Activated naive CD4-positive, alpha-beta T cell treated with anti-CD3 and anti-CD28 coated beads for 36 hours (primary cell): ENCODE measurements at regions of chr1 and their contacts with region 1.

Region 1: GRCh38 chr1:153572569-153573015 is 6.9 kb upstream of the S100A2 start:
- DNase-seq: peak; percentile 85
- H3K4me3 Mint-ChIP-seq: no peak overlapping the region
- H3K27ac Mint-ChIP-seq: peak overlapping the region; percentile 18
- H3K4me1 Mint-ChIP-seq: peaks cover 40% of the 10 kb centered on the region
- H3K27me3 Mint-ChIP-seq: peaks cover 1% of the 10 kb centered on the region

Region 2: DNA sequence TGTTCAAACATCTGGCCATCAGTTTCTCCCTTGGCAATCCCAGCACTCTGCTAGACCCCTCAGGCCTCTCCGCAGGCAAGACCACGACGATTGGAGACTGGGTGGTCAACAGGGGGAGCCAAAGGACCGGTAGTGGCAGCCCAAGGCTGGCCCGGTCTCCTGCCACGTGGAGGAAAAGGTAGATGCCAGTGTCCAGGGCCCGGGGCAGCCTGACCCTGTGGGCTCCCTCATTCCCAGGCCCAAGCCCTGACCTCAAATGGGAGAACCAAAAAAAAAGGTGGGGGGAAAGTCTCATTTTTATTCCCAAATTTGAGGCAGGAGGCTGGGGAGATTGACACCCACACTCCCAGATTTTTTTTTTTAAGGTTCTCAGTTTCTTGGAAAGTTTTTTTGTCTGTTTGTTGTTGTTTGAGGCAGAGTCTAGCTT is 61.6 kb before region 1 on chr1:
- CTCF ChIA-PET with region 1: interaction called, 153 read pairs
- intact Hi-C with region 1: loop called (anchors 1 kb)
- DNase-seq: peak; percentile 90
- H3K4me3 Mint-ChIP-seq: no peak overlapping the region
- H3K27ac Mint-ChIP-seq: peak overlapping the region; percentile 36
- H3K4me1 Mint-ChIP-seq: peaks cover 8% of the 10 kb centered on the region
- H3K27me3 Mint-ChIP-seq: no peaks in the 10 kb centered on the region

Region 3: GRCh38 chr1:153545067-153546055 is 27.2 kb before region 1 on chr1 and contains the start of gene S100A4:
- CTCF ChIA-PET with region 1: interaction called, 23 read pairs
- intact Hi-C with region 1: no loop called
- DNase-seq: peak; percentile 98
- H3K4me3 Mint-ChIP-seq: peak within 1 kb of the TSS; percentile 71
- H3K27ac Mint-ChIP-seq: peak within 1 kb of the TSS; percentile 93
- H3K4me1 Mint-ChIP-seq: peaks cover 74% of the 10 kb centered on the region
- H3K27me3 Mint-ChIP-seq: no peaks in the 10 kb centered on the region
- total RNA-seq, gene S100A4: 36.5 to 37.9 TPM

Region 4: DNA sequence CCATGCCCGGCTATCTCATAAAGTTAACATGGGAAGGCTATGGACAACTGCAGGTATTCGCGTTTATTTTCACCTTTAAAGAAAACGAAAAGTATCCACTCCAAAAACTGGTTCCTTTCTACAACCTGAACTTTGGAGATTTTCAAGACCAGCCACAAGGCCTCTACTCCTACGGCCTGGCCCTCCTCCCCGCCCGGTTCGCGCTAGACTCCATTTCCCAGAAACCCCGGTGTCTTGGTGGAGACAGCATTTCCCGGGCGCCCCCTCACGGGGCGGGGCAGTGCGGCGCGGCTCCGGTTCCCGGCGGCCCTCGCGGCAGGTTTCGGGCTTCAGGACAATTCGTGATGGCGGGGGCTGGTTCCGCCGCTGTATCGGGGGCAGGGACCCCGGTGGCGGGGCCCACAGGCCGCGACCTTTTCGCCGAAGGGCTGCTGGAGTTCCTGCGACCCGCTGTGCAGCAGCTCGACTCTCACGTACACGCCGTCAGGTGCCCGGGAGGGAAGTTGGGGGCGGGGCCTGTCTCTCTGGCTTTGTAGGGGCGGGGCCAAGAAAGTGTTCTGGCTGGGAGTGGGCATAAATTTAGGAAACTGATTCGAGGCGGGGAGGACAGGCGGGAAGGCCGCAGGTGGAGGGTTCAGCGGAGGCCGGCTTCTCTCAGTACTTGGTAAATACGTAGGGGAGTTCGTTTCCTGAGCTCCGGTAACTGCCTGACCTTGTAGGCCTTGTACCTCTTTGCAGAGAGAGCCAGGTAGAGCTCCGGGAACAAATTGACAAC is 86.0 kb after region 1 on chr1 and contains the start of gene SNAPIN:
- CTCF ChIA-PET with region 1: no interaction called
- intact Hi-C with region 1: loop called (anchors 1 kb)
- DNase-seq: peak; percentile 95
- H3K4me3 Mint-ChIP-seq: peak within 1 kb of the TSS; percentile 97
- H3K27ac Mint-ChIP-seq: peak within 1 kb of the TSS; percentile 94
- H3K4me1 Mint-ChIP-seq: peaks cover 15% of the 10 kb centered on the region
- H3K27me3 Mint-ChIP-seq: no peaks in the 10 kb centered on the region
- total RNA-seq, gene SNAPIN: 24.4 to 26.2 TPM

Region 5: GRCh38 chr1:153775458-153776327 is 203.1 kb after region 1 on chr1:
- CTCF ChIA-PET with region 1: interaction called, 3 read pairs
- intact Hi-C with region 1: loop called (anchors 2 kb)
- DNase-seq: peak; percentile 60
- H3K4me3 Mint-ChIP-seq: peak overlapping the region; percentile 69
- H3K27ac Mint-ChIP-seq: no peak overlapping the region
- H3K4me1 Mint-ChIP-seq: peaks cover 9% of the 10 kb centered on the region
- H3K27me3 Mint-ChIP-seq: no peaks in the 10 kb centered on the region

Region 6: GRCh38 chr1:153832293-153832692 is 259.7 kb after region 1 on chr1:
- CTCF ChIA-PET with region 1: no interaction called
- intact Hi-C with region 1: no loop called
- DNase-seq: no peak
- H3K4me3 Mint-ChIP-seq: no peak overlapping the region
- H3K27ac Mint-ChIP-seq: no peak overlapping the region
- H3K4me1 Mint-ChIP-seq: peaks cover 29% of the 10 kb centered on the region
- H3K27me3 Mint-ChIP-seq: no peaks in the 10 kb centered on the region